Activated T-helper 1 cell treated with anti-CD3 and anti-CD28 coated beads, Interleukin-12 subunit alpha, Interleukin-12 subunit beta, Interleukin-2, Interleukin-4 antibody, amounts not matched to agents 30 ng/mL and 10 ng/mL and 1 ng/mL, durations not matched to agents 14 hours and 24 hours and 36 hours (primary cell): ENCODE measurements at regions of chr17 and their contacts with region 1.

Region 1: DNA sequence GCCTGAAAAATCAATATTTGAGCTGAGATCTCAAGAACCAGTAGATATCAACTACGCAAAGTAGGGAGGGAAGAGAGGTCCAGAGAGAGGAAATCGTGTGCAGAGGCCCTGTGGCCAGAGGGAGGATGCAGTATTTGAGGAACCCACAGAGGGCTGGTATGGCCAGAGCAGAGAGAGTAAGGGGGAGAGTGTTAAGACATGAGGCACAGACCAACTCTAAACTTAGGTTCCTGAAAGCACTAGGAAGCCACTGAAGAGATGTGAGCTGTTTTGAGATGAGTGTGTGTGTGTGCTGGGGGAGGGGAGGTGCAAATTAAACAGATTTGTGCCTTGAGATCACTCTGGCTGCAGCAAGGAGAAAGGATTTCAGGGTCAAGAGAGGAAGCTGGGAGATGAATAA is 10.9 kb downstream of the SLC13A2 start:
- DNase-seq: no peak
- H3K4me3 Mint-ChIP-seq: no peak overlapping the region
- H3K27ac Mint-ChIP-seq: no peak overlapping the region
- H3K4me1 Mint-ChIP-seq: peaks cover 13% of the 10 kb centered on the region
- H3K27me3 Mint-ChIP-seq: peaks cover 12% of the 10 kb centered on the region

Region 2: DNA sequence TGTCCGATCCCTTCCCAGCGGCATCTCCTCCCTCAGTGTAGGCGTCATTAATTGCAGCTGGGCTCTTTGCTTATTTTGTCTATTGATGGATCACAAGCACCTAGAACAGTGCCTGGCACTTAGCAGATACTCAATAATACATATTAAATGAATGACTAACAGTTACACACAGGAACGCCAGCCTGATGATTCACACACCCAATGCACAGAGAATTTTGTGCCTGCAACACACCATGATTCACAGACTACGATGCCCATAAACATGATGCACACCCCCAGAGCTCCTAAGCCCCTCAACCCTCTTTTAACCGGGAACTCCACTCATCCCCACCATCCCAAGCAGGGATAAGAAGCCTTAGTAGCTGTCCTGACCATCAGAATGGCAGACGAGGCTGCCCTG is 231.9 kb before region 1 on chr17:
- intact Hi-C with region 1: no loop called
- DNase-seq: no peak
- H3K4me3 Mint-ChIP-seq: no peak overlapping the region
- H3K27ac Mint-ChIP-seq: no peak overlapping the region
- H3K4me1 Mint-ChIP-seq: peaks cover 8% of the 10 kb centered on the region
- H3K27me3 Mint-ChIP-seq: peaks cover 14% of the 10 kb centered on the region

Region 3: DNA sequence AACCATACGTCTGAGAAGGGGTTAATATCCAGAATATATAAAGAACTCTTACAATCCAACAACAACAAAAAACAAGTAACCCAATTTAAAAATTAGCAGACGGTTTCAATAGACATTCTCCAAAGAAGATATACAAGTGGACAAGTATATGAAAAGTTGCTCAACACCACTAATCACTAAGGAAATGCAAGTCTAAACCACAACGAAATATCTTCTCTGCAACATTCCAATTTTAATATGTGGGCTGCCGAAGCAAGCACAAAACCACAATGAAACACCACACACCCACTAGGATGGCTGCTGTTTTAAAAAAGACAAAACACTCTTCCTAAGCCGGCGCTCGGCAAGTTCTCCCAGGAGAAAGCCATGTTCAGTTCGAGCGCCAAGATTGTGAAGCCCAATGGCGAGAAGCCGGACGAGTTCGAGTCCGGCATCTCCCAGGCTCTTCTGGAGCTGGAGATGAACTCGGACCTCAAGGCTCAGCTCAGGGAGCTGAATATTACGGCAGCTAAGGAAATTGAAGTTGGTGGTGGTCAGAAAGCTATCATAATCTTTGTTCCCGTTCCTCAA is 16.8 kb before region 1 on chr17:
- intact Hi-C with region 1: loop called (anchors 1 kb)
- DNase-seq: no peak
- H3K4me3 Mint-ChIP-seq: no peak overlapping the region
- H3K27ac Mint-ChIP-seq: no peak overlapping the region
- H3K4me1 Mint-ChIP-seq: peaks cover 27% of the 10 kb centered on the region
- H3K27me3 Mint-ChIP-seq: peaks cover 21% of the 10 kb centered on the region